ENCODE measurements at regions of chr3 and their contacts with region 1.

Region 1: GRCh38 chr3:122101646-122102045 is 46.5 kb downstream of the CD86 start:
- DNase-seq: peak; percentile 45
- H3K4me3 ChIP-seq: no peak overlapping the region
- H3K27ac ChIP-seq: no peak overlapping the region
- H3K4me1 ChIP-seq: no peaks in the 10 kb centered on the region
- H3K27me3 ChIP-seq: peaks cover 8 to 11% of the 10 kb centered on the region in 2 experiments
- CTCF ChIP-seq: peak in 1 of 2 donors; percentile 34
- POLR2A ChIP-seq: no peak

Region 2: DNA sequence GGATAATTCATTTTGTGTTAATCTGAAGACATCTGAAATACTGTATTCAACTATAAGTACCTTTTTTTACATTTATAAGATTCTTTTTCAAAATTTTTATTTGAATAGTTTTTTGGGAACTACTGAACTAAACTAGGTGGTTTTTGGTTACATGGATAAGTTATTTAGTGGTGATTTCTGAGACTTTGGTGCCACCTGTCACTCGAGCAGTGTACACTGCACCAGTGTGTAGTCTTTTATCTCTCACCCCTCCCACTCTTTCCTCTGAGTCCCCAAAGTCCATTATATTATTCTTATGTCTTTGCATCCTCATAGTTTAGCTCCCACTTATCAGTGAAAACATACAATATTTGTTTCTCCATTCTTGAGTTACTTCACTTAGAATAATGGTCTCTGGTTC is 11.1 kb after region 1 on chr3:
- CTCF ChIA-PET with region 1: interaction called, 14 read pairs
- POLR2A ChIA-PET with region 1: no interaction called
- dilution Hi-C with region 1: no loop called
- intact Hi-C with region 1: no loop called
- DNase-seq: no peak
- H3K4me3 ChIP-seq: no peak overlapping the region
- H3K27ac ChIP-seq: no peak overlapping the region
- H3K4me1 ChIP-seq: no peaks in the 10 kb centered on the region
- H3K27me3 ChIP-seq: peaks cover 2% of the 10 kb centered on the region in 2 experiments
- CTCF ChIP-seq: no peak
- POLR2A ChIP-seq: no peak

Region 3: DNA sequence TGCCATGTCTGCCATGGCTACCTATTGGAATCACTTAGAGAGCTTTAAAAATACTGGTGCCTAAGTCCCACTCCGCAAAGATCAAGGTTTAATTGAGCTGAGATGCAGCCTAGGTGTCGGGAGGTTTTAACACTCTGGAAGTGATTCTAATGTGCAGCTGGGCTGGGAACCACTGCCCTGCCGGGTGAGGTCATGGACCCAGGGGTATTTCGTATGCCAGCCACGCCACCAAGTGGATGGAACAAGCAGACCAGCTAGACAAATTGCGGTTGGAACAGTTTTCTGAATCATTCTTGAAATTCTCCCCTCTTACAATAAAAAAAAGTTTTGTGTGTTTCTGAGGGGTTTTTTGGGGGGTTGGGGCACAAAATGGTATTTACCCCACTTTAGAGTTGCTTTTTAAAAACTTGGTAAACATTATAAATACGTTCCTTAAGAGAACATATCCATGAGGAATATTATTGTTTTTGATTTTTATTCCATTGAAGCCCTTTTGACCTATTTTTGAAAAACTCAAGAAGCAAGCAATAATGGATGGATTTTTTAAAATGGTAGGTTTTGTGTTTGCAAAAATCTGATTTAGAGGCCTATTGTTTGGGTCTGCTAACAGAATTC is 157.2 kb after region 1 on chr3:
- CTCF ChIA-PET with region 1: interaction called, 70 read pairs
- POLR2A ChIA-PET with region 1: no interaction called
- dilution Hi-C with region 1: no loop called
- intact Hi-C with region 1: loop called (anchors 1 kb)
- DNase-seq: peak; percentile 54
- H3K4me3 ChIP-seq: no peak overlapping the region
- H3K27ac ChIP-seq: no peak overlapping the region
- H3K4me1 ChIP-seq: no peaks in the 10 kb centered on the region
- H3K27me3 ChIP-seq: peaks cover 7 to 11% of the 10 kb centered on the region in 2 experiments
- CTCF ChIP-seq: peak; percentile 56 to 63
- POLR2A ChIP-seq: no peak

Region 4: DNA sequence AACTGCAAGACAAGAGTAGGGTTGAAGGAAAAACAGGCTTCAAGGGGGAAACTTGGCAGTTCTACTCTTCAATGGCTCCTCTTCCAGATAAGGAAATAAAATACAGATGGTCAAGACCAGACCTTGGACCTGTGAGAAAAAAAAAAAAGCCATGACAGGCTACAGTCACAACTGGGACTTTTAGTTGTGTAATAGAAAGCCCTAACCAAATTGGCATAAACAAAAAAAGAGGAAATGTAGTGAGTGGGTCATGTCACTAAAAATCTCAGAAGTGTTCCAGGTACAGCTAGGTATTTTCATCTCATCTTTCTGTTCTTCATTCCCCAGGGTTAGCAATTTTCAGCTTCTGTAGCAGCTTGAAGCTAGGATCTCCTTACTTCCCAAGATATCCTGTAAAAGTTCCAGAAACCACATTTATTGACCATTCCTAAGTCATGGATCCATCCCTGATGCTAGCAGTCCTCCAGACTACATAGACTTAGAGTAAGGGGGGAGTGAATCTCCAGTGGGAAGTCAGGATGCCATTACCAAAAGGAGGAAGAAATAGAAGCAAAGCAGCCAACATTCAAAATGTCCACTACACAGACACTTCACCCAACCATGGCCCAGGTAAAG is 162.4 kb after region 1 on chr3:
- CTCF ChIA-PET with region 1: interaction called, 70 read pairs
- POLR2A ChIA-PET with region 1: no interaction called
- dilution Hi-C with region 1: no loop called
- intact Hi-C with region 1: no loop called
- DNase-seq: no peak
- H3K4me3 ChIP-seq: no peak overlapping the region
- H3K27ac ChIP-seq: no peak overlapping the region
- H3K4me1 ChIP-seq: no peaks in the 10 kb centered on the region
- H3K27me3 ChIP-seq: peaks cover 6 to 11% of the 10 kb centered on the region in 2 experiments
- CTCF ChIP-seq: no peak
- POLR2A ChIP-seq: no peak

Region 5: DNA sequence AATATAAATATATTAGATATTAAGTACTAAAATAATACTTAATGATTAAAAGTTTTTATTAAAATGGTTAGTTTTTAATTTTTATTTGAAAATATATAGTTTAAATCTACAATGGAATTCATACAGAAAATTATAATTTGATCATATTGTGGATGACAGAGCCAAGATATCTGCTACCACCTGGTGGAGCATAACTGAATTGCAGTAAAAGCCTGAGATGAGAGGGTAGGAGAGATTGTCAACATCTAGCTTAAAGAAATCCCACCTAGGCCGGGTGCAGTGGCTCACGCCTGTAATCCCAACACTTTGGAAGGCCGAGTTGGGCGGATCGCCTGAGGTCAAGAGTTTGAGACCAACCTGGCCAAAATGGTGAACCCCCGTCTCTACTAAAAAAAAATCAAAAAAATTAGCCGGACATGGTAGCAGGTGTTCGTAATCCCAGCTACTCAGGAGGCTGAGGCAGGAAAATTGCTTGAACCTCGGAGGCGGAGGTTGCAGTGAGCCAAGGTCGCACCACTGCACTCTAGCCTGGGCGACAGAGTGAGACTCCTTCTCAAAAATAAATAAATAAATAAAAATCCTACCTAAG is 198.3 kb after region 1 on chr3:
- CTCF ChIA-PET with region 1: interaction called, 39 read pairs
- POLR2A ChIA-PET with region 1: no interaction called
- dilution Hi-C with region 1: no loop called
- intact Hi-C with region 1: loop called (anchors 1 kb)
- DNase-seq: peak; percentile 17
- H3K4me3 ChIP-seq: no peak overlapping the region
- H3K27ac ChIP-seq: no peak overlapping the region
- H3K4me1 ChIP-seq: no peaks in the 10 kb centered on the region
- H3K27me3 ChIP-seq: peaks cover 0 to 1% of the 10 kb centered on the region in 2 experiments
- CTCF ChIP-seq: peak; percentile 40 to 42
- POLR2A ChIP-seq: no peak

Region 6: DNA sequence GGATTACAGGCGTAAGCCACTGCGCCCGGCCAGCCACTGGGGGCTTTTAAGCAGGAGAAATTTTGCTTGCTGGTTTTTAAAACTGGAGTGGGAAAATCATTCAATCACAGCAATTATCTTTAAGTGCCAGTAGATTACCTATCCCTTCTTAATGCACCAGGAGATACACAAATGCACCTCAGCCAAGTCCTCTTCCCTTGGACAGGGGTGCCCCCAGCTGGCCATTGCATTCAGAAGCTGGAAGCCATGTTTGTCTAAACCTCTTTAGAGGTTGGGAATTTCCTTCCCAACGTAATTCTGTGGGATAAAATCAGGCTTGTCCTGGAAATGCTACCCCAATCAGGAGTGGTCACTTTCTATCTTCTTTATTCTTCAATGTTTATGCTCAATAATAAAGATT is 254.8 kb after region 1 on chr3:
- CTCF ChIA-PET with region 1: no interaction called
- POLR2A ChIA-PET with region 1: no interaction called
- dilution Hi-C with region 1: no loop called
- intact Hi-C with region 1: no loop called
- DNase-seq: no peak
- H3K4me3 ChIP-seq: no peak overlapping the region
- H3K27ac ChIP-seq: no peak overlapping the region
- H3K4me1 ChIP-seq: no peaks in the 10 kb centered on the region
- H3K27me3 ChIP-seq: no peaks in the 10 kb centered on the region
- CTCF ChIP-seq: peak in 1 of 2 donors; percentile 16
- POLR2A ChIP-seq: no peak

Region 7: GRCh38 chr3:122383771-122384697 is 282.4 kb after region 1 on chr3 and contains the start of gene FAM162A:
- CTCF ChIA-PET with region 1: no interaction called
- POLR2A ChIA-PET with region 1: no interaction called
- dilution Hi-C with region 1: no loop called
- intact Hi-C with region 1: loop called (anchors 5 kb)
- DNase-seq: peak; percentile 96
- H3K4me3 ChIP-seq: peak within 1 kb of the TSS; percentile 69 to 97 (median 77)
- H3K27ac ChIP-seq: peak within 1 kb of the TSS; percentile 58
- H3K4me1 ChIP-seq: peaks cover 16% of the 10 kb centered on the region
- H3K27me3 ChIP-seq: no peaks in the 10 kb centered on the region
- CTCF ChIP-seq: peak; percentile 53 to 69
- POLR2A ChIP-seq: peak; percentile 86
- total RNA-seq, gene FAM162A: 23.4 and 25.9 TPM in 2 replicates

Measured in endothelial cell of umbilical vein (primary cell).